Activated T-helper 1 cell treated with anti-CD3 and anti-CD28 coated beads, Interleukin-12 subunit alpha, Interleukin-12 subunit beta, Interleukin-2, Interleukin-4 antibody, amounts not matched to agents 30 ng/mL and 10 ng/mL and 1 ng/mL, durations not matched to agents 14 hours and 24 hours and 36 hours (primary cell): ENCODE measurements at regions of chrX and their contacts with region 1.

Region 1: GRCh38 chrX:49043220-49043986 is at the start of gene TFE3:
- DNase-seq: peak; percentile 94
- H3K4me3 Mint-ChIP-seq: peak within 1 kb of the TSS; percentile 96
- H3K27ac Mint-ChIP-seq: peak within 1 kb of the TSS; percentile 95
- H3K4me1 Mint-ChIP-seq: peaks cover 39% of the 10 kb centered on the region
- H3K27me3 Mint-ChIP-seq: no peaks in the 10 kb centered on the region
- total RNA-seq, gene TFE3: 34.4 and 37.0 TPM in 2 replicates

Region 2: GRCh38 chrX:48737213-48737938 is 306.0 kb before region 1 on chrX:
- intact Hi-C with region 1: loop called (anchors 1 kb)
- DNase-seq: peak; percentile 85
- H3K4me3 Mint-ChIP-seq: peak overlapping the region; percentile 98
- H3K27ac Mint-ChIP-seq: peak overlapping the region; percentile 98
- H3K4me1 Mint-ChIP-seq: peaks cover 23% of the 10 kb centered on the region
- H3K27me3 Mint-ChIP-seq: no peaks in the 10 kb centered on the region

Region 3: DNA sequence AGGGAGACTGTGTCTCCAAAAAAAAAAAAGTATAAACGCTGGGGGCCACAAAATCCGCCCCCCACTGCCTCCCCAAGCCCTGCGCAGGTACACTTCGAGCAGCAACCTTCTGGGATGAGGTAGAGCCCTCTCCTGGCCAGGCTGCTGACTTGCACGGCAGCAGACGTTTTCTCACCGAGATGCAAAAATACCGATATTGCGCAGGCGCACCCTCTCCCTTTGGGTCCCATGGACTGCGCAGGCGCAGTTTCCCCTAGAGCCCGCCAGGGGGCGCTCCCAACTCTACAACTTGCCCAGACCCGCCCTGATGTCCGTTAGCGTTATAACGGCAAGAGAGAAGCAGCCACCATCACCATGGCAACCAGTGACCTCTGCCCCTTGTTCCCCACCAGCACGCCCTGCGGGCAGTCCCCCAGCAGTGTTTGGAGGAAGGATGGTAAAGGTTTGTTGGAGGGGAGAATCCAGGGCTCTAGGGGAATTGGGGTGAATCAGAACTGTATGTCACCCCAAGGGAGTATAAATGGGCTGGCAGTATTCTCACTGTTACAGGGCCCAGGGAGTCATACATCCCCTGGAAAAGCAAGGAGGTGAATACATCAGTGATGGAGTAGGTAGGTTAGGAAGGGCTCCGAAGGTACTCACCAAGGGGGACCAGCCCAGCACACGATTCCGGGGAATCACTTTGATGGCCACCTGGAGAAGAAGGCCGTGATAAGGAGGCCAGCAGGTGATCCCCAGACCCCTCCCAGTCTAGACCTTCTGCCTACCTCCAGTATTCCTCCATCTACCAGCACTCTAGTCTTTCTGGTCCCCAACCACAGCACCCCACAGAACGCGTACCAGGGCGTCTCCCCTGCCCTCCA is 126.0 kb before region 1 on chrX:
- intact Hi-C with region 1: loop called (anchors 1 kb)
- DNase-seq: peak; percentile 87
- H3K4me3 Mint-ChIP-seq: peak overlapping the region; percentile 98
- H3K27ac Mint-ChIP-seq: peak overlapping the region; percentile 97
- H3K4me1 Mint-ChIP-seq: peaks cover 35% of the 10 kb centered on the region
- H3K27me3 Mint-ChIP-seq: no peaks in the 10 kb centered on the region

Region 4: GRCh38 chrX:49002091-49002935 is 41.1 kb before region 1 on chrX and contains the start of gene GRIPAP1:
- intact Hi-C with region 1: loop called (anchors 1 kb)
- DNase-seq: peak; percentile 68
- H3K4me3 Mint-ChIP-seq: peak within 1 kb of the TSS; percentile 99
- H3K27ac Mint-ChIP-seq: peak within 1 kb of the TSS; percentile 96
- H3K4me1 Mint-ChIP-seq: peaks cover 35% of the 10 kb centered on the region
- H3K27me3 Mint-ChIP-seq: no peaks in the 10 kb centered on the region
- total RNA-seq, gene GRIPAP1: 85.8 and 89.2 TPM in 2 replicates

Region 5: GRCh38 chrX:49019599-49020249 is 23.7 kb before region 1 on chrX:
- intact Hi-C with region 1: no loop called
- DNase-seq: no peak
- H3K4me3 Mint-ChIP-seq: no peak overlapping the region
- H3K27ac Mint-ChIP-seq: no peak overlapping the region
- H3K4me1 Mint-ChIP-seq: no peaks in the 10 kb centered on the region
- H3K27me3 Mint-ChIP-seq: no peaks in the 10 kb centered on the region

Region 6: DNA sequence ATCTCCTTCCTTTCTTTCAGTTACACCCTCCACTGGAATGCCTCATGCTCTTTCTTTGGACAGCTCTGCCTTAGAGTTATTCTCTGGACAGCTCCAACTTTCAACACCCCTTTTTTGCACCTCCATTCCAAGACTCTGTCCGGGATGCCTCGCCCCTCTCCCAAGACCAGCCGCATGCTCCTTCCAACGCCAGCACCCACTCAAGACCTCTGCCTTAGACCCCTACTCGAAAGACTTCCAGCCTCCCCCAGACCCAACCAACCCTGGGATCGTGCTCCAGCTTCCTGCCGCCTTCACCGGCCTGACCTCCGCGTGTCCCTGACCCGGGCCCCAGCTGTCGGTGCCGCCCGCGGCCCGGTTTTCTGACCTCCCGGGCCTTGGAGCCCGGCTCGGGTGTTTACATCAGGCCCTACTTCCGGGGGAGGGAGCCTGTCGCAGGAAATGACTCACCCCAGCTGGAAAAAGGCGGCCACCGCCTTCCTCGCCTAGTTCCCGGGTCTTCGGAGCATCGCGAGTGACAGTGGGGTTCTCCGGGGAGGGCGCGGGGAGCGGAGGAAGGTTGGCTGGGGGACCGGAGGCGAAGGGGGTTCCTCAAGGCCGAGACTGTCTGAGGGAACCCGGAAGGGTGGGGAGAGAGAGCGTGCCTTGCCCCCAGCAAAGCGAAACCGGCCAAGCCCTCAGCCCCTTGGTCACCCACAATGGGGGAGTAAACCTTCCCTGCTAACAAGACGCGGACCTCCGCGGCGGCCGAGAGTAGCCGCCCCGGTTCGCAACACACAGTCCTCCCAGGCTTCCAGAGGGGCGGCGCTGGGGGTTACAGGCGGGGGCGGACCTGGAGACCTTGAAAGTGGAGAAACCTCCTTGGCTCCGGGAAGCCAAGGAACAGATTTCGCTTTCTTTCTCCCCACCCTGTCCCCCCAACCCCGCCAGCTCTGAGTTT is 36.4 kb after region 1 on chrX and contains the start of gene WDR45:
- intact Hi-C with region 1: loop called (anchors 1 kb)
- DNase-seq: peak; percentile 68
- H3K4me3 Mint-ChIP-seq: peak within 1 kb of the TSS; percentile 99
- H3K27ac Mint-ChIP-seq: peak within 1 kb of the TSS; percentile 93
- H3K4me1 Mint-ChIP-seq: peaks cover 12% of the 10 kb centered on the region
- H3K27me3 Mint-ChIP-seq: no peaks in the 10 kb centered on the region
- total RNA-seq, gene WDR45: 49.1 and 53.0 TPM in 2 replicates

Region 7: GRCh38 chrX:49269010-49269767 is 225.8 kb after region 1 on chrX:
- intact Hi-C with region 1: loop called (anchors 1 kb)
- DNase-seq: peak; percentile 90
- H3K4me3 Mint-ChIP-seq: peak overlapping the region; percentile 91
- H3K27ac Mint-ChIP-seq: peak overlapping the region; percentile 99
- H3K4me1 Mint-ChIP-seq: peaks cover 60% of the 10 kb centered on the region
- H3K27me3 Mint-ChIP-seq: no peaks in the 10 kb centered on the region